Naive thymus-derived CD4-positive, alpha-beta T cell (primary cell): ENCODE measurements at regions of chr10 and their contacts with region 1.

Region 1: DNA sequence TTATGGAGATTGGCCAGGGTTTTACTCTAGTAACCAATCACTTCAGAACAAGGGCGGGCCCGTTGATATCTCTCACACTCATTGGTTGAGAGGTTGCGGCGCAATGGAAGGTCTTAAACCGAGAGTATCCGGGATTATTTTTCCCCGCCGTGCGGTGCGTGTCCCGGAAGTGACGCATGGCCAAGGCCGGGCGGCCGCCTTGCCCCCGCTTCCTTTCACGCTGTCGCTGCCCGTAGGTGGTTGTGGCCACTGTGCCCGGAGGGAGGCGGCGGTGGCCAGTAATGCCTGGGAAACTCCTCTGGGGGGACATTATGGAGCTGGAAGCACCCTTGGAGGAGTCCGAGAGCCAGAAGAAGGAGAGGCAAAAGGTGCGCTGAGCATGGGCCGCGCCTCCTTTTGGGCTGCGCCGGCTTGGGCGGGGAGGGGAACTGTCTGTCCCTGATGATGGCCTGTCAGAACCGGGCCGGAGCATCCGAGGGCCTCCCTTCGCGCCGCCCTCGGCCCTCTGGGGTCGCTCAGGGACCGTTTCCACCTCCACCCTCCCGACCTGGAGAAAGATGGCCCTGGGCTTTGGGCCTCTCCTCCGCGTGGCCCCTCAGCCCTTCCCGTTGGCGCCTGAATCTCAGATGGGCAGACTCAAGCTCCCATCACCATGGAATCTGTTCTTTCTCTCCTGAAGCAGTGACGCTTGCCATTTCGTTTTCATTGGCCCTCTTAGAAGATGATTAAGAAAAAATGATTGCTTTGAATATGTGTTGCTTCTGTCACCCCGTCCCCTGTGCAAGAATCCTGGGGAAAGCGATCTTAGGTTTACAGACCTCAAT is at the start of gene DDX50:
- DNase-seq: peak; percentile 86 to 97 (median 95)
- ATAC-seq: peak; percentile 98
- H3K4me3 ChIP-seq: peak within 1 kb of the TSS; percentile 78
- H3K4me3 Mint-ChIP-seq: peak within 1 kb of the TSS; percentile 93 to 99 (median 97)
- H3K27ac ChIP-seq: peak within 1 kb of the TSS; percentile 95
- H3K27ac Mint-ChIP-seq: peak within 1 kb of the TSS; percentile 97 to 100 (median 99)
- H3K4me1 ChIP-seq: peaks cover 20 to 34% of the 10 kb centered on the region in 2 donors
- H3K4me1 Mint-ChIP-seq: peaks cover 28 to 53% (median 44%) of the 10 kb centered on the region in 7 donors
- H3K27me3 ChIP-seq: no peaks in the 10 kb centered on the region
- H3K27me3 Mint-ChIP-seq: no peaks in the 10 kb centered on the region
- total RNA-seq, gene DDX50: 28.3 to 49.3 (median 47.5) TPM

Region 2: GRCh38 chr10:67666416-67667034 is 1234.8 kb before region 1 on chr10:
- CTCF ChIA-PET with region 1: no interaction called
- POLR2A ChIA-PET with region 1: no interaction called
- intact Hi-C with region 1: loop called in 1 of 2 experiments (anchors 5 kb)
- DNase-seq: peak in 5 of 9 donors; percentile 8 to 21 (median 17)
- ATAC-seq: no peak
- H3K4me3 ChIP-seq: no peak overlapping the region
- H3K4me3 Mint-ChIP-seq: no peak overlapping the region
- H3K27ac ChIP-seq: no peak overlapping the region
- H3K27ac Mint-ChIP-seq: no peak overlapping the region
- H3K4me1 ChIP-seq: no peaks in the 10 kb centered on the region
- H3K4me1 Mint-ChIP-seq: no peaks in the 10 kb centered on the region
- H3K27me3 ChIP-seq: no peaks in the 10 kb centered on the region
- H3K27me3 Mint-ChIP-seq: peaks cover 0 to 32% (median 0%) of the 10 kb centered on the region in 5 donors

Region 3: GRCh38 chr10:68208424-68209042 is 692.8 kb before region 1 on chr10:
- CTCF ChIA-PET with region 1: no interaction called
- POLR2A ChIA-PET with region 1: no interaction called
- intact Hi-C with region 1: loop called in 1 of 2 experiments (anchors 2 kb)
- DNase-seq: no peak
- ATAC-seq: no peak
- H3K4me3 ChIP-seq: no peak overlapping the region
- H3K4me3 Mint-ChIP-seq: no peak overlapping the region
- H3K27ac ChIP-seq: no peak overlapping the region
- H3K27ac Mint-ChIP-seq: peak overlapping the region in 1 of 9 donors; percentile 22
- H3K4me1 ChIP-seq: no peaks in the 10 kb centered on the region
- H3K4me1 Mint-ChIP-seq: peaks cover 0 to 4% (median 0%) of the 10 kb centered on the region in 7 donors
- H3K27me3 ChIP-seq: no peaks in the 10 kb centered on the region
- H3K27me3 Mint-ChIP-seq: peaks cover 0 to 36% (median 10%) of the 10 kb centered on the region in 5 donors

Region 4: DNA sequence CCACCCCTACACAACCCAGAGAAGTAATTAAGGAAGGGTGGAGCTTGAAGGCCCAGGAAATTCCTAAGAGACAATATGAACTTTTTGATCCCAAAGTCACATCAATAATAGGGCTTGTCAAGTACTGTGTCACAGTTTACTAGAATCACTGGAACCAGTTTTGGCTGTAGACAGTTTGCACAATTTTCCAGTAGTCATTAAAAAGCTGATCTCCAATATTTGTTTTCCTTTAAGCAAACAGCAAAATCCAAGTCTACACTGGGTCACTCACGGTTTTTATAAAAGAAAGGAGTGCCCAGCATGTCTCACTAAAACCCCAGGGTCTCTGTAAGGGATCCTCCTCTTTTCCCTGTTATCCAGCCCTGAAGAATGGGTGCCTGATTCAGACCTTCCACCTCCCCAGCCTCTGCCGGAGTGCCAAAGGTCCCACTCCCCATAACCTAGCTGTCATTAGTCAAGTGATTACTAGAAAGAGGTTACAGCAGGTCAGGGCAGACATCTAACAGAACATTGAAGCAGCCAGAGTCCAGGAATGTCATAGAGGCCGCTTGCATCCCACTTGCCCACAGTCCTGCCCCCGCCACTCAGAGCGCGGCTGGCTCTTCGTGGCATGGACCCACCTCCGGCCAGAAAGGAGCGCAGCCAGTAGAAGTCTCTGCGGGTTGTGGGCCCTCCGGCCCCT is 374.5 kb before region 1 on chr10:
- CTCF ChIA-PET with region 1: no interaction called
- POLR2A ChIA-PET with region 1: interaction called, 3 read pairs
- intact Hi-C with region 1: loop called (anchors 1 kb)
- DNase-seq: peak in 1 of 9 donors; percentile 4
- ATAC-seq: no peak
- H3K4me3 ChIP-seq: peak overlapping the region; percentile 91
- H3K4me3 Mint-ChIP-seq: peak overlapping the region; percentile 87 to 94 (median 92)
- H3K27ac ChIP-seq: peak overlapping the region; percentile 96
- H3K27ac Mint-ChIP-seq: peak overlapping the region; percentile 78 to 97 (median 95)
- H3K4me1 ChIP-seq: peaks cover 0 to 5% of the 10 kb centered on the region in 2 donors
- H3K4me1 Mint-ChIP-seq: peaks cover 0 to 20% (median 7%) of the 10 kb centered on the region in 7 donors
- H3K27me3 ChIP-seq: no peaks in the 10 kb centered on the region
- H3K27me3 Mint-ChIP-seq: no peaks in the 10 kb centered on the region

Region 5: DNA sequence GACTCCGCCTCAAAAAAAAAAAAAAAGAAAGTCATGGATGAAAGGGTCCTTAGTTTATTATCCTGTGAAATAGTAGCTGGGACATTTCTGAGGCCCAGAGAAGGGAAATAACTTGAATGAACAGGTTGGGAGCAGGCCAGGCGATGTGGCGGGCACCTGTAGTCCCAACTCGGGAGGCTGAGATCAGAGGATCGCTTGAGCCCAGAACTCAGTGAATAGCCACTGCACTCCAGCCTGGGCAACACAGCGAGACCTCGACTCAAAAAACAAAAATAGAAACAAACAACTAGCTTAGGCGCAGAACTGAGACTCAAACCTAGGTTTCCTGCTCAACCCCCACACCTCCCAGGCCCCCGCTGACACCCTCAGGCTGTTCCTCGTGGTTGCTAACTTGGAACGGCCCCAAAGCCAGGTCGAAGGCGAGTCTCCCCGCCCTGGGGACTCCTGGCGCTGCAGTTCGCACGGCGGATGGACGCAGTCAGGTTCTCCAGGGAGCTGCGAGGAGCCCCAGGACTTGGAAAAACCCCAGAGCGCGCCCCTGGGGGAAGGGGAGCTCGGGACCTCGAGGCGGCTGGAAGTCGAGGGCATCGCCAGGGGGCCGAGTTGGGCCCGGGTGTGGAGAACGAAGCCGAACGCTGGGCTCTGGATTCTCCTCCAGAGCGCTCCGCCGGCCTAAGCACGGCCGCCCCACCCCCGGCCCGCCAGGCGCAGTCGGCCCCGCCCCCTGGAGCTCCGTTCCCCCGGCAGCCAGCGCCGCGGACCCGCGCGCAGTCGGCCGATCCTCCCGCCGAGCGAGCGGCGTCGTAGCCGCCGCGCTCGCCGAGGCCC is 74.3 kb before region 1 on chr10 and contains the start of gene STOX1:
- CTCF ChIA-PET with region 1: no interaction called
- POLR2A ChIA-PET with region 1: interaction called, 10 read pairs
- intact Hi-C with region 1: loop called (anchors 2 to 5 kb)
- DNase-seq: peak; percentile 30 to 76 (median 60)
- ATAC-seq: peak; percentile 76
- H3K4me3 ChIP-seq: peak within 1 kb of the TSS; percentile 74
- H3K4me3 Mint-ChIP-seq: peak within 1 kb of the TSS; percentile 69 to 85 (median 81)
- H3K27ac ChIP-seq: peak within 1 kb of the TSS; percentile 61
- H3K27ac Mint-ChIP-seq: peak within 1 kb of the TSS in 6 of 9 donors; percentile 19 to 90 (median 56)
- H3K4me1 ChIP-seq: peaks cover 5 to 18% of the 10 kb centered on the region in 2 donors
- H3K4me1 Mint-ChIP-seq: peaks cover 0 to 33% (median 25%) of the 10 kb centered on the region in 7 donors
- H3K27me3 ChIP-seq: no peaks in the 10 kb centered on the region
- H3K27me3 Mint-ChIP-seq: peaks cover 0 to 28% (median 0%) of the 10 kb centered on the region in 5 donors
- total RNA-seq, gene STOX1: 0.29 to 1.2 (median 0.79) TPM

Region 6: DNA sequence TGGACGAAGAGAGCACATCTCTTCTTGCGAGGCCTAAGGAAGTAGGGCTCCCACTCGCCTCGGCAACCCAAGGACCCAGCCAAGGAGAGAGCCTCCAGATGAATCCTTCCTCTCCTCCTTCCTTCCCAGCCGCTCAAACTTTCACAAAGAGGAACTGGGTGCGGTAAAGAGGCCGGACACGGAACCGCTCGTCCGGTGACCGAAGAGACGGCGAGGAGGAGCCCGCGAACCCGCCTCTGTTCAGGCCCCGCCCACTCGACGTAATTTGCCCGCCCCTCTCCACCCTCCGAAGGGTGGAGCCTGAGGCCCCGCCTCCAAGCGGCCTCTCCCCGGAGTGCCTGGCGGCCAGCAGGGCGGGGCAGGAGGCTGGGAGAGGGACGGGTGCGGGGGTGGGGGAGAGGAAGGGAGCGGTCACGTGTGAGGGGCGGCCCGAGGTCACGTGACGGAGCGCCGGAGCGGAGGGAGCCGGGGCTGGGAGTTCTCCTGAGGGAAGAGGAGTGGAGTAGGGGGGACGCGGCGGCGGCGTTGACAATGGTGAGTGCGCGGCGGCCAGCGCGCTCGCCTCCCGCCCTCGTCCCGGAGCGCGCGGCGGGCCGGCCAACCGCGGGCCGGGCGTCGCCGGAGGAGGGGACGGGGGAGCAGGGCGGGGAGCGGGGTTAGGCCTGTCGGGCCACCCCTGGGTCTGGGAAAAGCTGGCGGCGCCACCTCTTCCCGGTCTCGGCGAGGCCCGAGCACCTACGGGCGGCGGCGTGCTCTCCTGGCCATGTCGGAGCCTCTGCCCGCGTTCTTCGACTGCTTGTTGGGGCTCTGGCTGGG is 222.6 kb after region 1 on chr10 and contains the start of gene VPS26A:
- CTCF ChIA-PET with region 1: no interaction called
- POLR2A ChIA-PET with region 1: no interaction called
- intact Hi-C with region 1: loop called (anchors 1 to 2 kb)
- DNase-seq: peak; percentile 97 to 100 (median 99)
- ATAC-seq: peak; percentile 99
- H3K4me3 ChIP-seq: peak within 1 kb of the TSS; percentile 85
- H3K4me3 Mint-ChIP-seq: peak within 1 kb of the TSS; percentile 93 to 99 (median 96)
- H3K27ac ChIP-seq: peak within 1 kb of the TSS; percentile 94
- H3K27ac Mint-ChIP-seq: peak within 1 kb of the TSS; percentile 92 to 98 (median 97)
- H3K4me1 ChIP-seq: peaks cover 8 to 16% of the 10 kb centered on the region in 2 donors
- H3K4me1 Mint-ChIP-seq: peaks cover 5 to 37% (median 35%) of the 10 kb centered on the region in 7 donors
- H3K27me3 ChIP-seq: no peaks in the 10 kb centered on the region
- H3K27me3 Mint-ChIP-seq: no peaks in the 10 kb centered on the region
- total RNA-seq, gene VPS26A: 25.5 to 35.0 (median 29.5) TPM

Region 7: GRCh38 chr10:70879207-70879606 is 1977.9 kb after region 1 on chr10:
- CTCF ChIA-PET with region 1: no interaction called
- POLR2A ChIA-PET with region 1: no interaction called
- intact Hi-C with region 1: no loop called
- DNase-seq: no peak
- ATAC-seq: no peak
- H3K4me3 ChIP-seq: no peak overlapping the region
- H3K4me3 Mint-ChIP-seq: no peak overlapping the region
- H3K27ac ChIP-seq: no peak overlapping the region
- H3K27ac Mint-ChIP-seq: no peak overlapping the region
- H3K4me1 ChIP-seq: no peaks in the 10 kb centered on the region
- H3K4me1 Mint-ChIP-seq: peaks cover 0 to 8% (median 3%) of the 10 kb centered on the region in 7 donors
- H3K27me3 ChIP-seq: no peaks in the 10 kb centered on the region
- H3K27me3 Mint-ChIP-seq: no peaks in the 10 kb centered on the region